ENCODE measurements at regions of chr14 and their contacts with region 1.

Region 1: DNA sequence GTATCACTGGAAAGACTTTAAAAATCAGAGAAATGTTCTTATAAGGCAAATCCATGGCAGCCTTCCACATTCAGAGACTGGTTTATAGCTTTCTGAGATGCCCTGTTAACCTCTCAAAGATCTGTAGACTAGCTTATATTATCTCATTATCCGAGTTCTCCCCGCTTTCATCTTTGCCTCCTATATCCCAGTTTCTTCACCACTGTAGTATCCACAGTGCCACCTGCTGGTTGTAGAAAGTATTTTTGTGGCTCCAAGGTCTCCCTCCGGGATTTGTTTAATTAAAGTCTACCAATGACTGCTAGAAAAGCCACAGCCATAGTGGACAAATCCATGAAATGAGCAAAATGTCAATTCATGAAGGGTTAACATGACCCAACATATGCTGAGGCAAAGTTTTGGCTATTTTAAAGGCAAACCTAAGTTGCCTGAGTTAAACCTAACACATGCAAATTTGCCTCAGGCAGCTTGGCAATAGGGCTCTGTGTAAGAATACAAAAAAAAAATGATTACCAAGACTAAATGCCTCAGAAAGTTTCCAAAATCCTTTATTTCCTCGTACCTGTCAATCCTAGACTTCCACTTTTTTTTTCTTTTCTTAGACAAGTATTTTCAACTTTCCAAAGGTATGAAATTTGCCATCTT is 218.8 kb upstream of the BMP4 start:
- DNase-seq: peak; percentile 73
- H3K4me3 ChIP-seq: no peak overlapping the region
- H3K27ac ChIP-seq: no peak overlapping the region
- H3K4me1 ChIP-seq: peaks cover 0 to 32% (median 14%) of the 10 kb centered on the region in 4 donors
- H3K27me3 ChIP-seq: no peaks in the 10 kb centered on the region
- CTCF ChIP-seq: peak; percentile 65 to 84 (median 82)
- EP300 ChIP-seq: no peak
- POLR2A ChIP-seq: no peak

Region 2: GRCh38 chr14:53432378-53432802 is 743.0 kb before region 1 on chr14:
- intact Hi-C with region 1: loop called (anchors 10 kb)
- DNase-seq: no peak
- H3K4me3 ChIP-seq: no peak overlapping the region
- H3K27ac ChIP-seq: no peak overlapping the region
- H3K4me1 ChIP-seq: no peaks in the 10 kb centered on the region
- H3K27me3 ChIP-seq: no peaks in the 10 kb centered on the region
- CTCF ChIP-seq: peak; percentile 14 to 58 (median 50)
- EP300 ChIP-seq: no peak
- POLR2A ChIP-seq: no peak

Region 3: DNA sequence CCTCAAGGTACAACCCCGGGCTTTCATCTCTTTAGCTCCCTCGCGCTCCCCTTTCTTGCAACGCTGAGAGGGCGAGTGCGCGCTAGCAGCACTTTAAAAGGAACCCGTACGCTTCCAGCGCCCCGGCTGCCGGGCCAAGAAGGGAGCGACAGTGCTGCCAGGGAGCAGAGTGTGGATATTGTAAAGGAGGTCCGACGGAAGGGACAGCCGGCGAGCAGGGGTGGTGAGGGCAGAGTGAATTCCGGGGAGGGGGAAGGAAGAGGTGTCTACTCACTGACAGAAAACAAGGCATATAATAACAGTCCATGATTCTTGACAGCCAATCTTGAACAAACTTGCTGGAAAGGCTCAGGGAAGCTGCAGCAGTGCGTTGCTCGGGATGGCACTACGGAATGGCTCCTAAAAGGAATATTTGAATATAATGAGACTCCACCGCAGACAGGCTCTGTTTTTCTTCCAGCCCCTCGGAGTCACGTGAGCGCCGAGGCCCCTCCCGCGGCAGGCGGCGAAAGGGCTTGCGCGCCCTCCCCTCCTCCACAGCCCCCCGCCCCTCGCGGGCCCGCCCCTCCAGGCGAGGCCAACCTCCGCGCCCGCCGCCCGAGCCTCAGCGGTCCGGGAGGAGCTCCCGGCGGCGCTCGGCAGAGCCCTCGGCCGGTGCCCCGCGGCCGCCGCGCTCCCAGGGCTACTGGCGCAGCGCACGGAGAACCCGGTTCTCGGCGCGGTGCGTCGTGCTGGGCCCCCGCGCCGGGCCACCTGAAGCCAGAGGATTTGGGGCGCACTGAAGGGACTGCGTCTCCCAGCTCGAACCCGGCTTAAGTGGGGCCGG is 222.2 kb before region 1 on chr14:
- intact Hi-C with region 1: loop called (anchors 5 kb)
- DNase-seq: peak; percentile 94
- H3K4me3 ChIP-seq: peak overlapping the region; percentile 49 to 66 (median 58)
- H3K27ac ChIP-seq: peak overlapping the region; percentile 79 to 89 (median 82)
- H3K4me1 ChIP-seq: peaks cover 0 to 51% (median 42%) of the 10 kb centered on the region in 4 donors
- H3K27me3 ChIP-seq: peaks cover 7 to 46% (median 27%) of the 10 kb centered on the region in 3 donors
- CTCF ChIP-seq: no peak
- EP300 ChIP-seq: no peak
- POLR2A ChIP-seq: peak in 1 of 2 donors; percentile 26

Region 4: GRCh38 chr14:54133896-54134295 is 41.5 kb before region 1 on chr14:
- intact Hi-C with region 1: no loop called
- DNase-seq: no peak
- H3K4me3 ChIP-seq: no peak overlapping the region
- H3K27ac ChIP-seq: no peak overlapping the region
- H3K4me1 ChIP-seq: no peaks in the 10 kb centered on the region
- H3K27me3 ChIP-seq: no peaks in the 10 kb centered on the region
- CTCF ChIP-seq: no peak
- EP300 ChIP-seq: no peak
- POLR2A ChIP-seq: no peak

Region 5: GRCh38 chr14:54241517-54241916 is 66.1 kb after region 1 on chr14:
- intact Hi-C with region 1: no loop called
- DNase-seq: no peak
- H3K4me3 ChIP-seq: no peak overlapping the region
- H3K27ac ChIP-seq: no peak overlapping the region
- H3K4me1 ChIP-seq: no peaks in the 10 kb centered on the region
- H3K27me3 ChIP-seq: no peaks in the 10 kb centered on the region
- CTCF ChIP-seq: no peak
- EP300 ChIP-seq: no peak
- POLR2A ChIP-seq: no peak

Region 6: GRCh38 chr14:54329082-54329695 is 153.8 kb after region 1 on chr14:
- intact Hi-C with region 1: no loop called
- DNase-seq: no peak
- H3K4me3 ChIP-seq: no peak overlapping the region
- H3K27ac ChIP-seq: no peak overlapping the region
- H3K4me1 ChIP-seq: peaks cover 0 to 11% (median 7%) of the 10 kb centered on the region in 4 donors
- H3K27me3 ChIP-seq: no peaks in the 10 kb centered on the region
- CTCF ChIP-seq: peak; percentile 25 to 52 (median 46)
- EP300 ChIP-seq: no peak
- POLR2A ChIP-seq: no peak

Region 7: DNA sequence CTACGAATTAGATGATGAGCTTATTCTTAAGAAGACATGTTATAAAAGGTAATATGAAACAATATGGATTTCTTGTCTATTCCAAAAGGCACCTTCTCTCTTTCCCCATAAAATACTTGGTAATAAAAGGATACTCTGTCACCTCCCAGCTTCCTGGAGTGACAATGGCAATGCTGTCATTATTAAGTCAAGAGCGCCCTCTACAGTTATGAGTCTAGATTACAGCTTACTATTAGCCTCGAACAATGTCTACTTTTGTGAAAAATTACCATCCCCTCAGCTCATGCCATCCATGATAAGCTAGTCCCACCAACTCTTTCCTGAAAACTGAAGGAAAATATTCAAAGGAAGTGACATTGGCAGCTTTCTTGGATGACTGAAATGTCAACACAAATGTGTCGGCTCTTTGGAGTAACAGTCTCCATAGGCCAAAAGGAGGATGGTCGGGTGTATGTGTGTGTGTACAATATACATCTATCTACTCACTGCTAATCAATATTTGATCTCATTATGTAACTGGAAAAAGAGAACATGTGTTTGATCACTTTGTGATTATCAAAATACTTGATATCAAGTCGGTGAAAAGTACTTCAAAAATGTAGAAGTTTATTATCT is 172.7 kb after region 1 on chr14:
- intact Hi-C with region 1: loop called (anchors 10 kb)
- DNase-seq: no peak
- H3K4me3 ChIP-seq: no peak overlapping the region
- H3K27ac ChIP-seq: peak overlapping the region in 1 of 4 donors; percentile 56
- H3K4me1 ChIP-seq: no peaks in the 10 kb centered on the region
- H3K27me3 ChIP-seq: no peaks in the 10 kb centered on the region
- CTCF ChIP-seq: peak; percentile 12 to 61 (median 49)
- EP300 ChIP-seq: no peak
- POLR2A ChIP-seq: no peak